Activated CD4-positive, alpha-beta T cell treated with anti-CD3 and anti-CD28 coated beads for 36 hours (primary cell): ENCODE measurements at regions of chr13 and their contacts with region 1.

Region 1: GRCh38 chr13:21297914-21298831 is 121.7 kb downstream of the MRPL57 start:
- DNase-seq: peak; percentile 93
- ATAC-seq: peak; percentile 93
- H3K4me3 Mint-ChIP-seq: peak overlapping the region; percentile 84
- H3K27ac Mint-ChIP-seq: peak overlapping the region; percentile 82
- H3K4me1 Mint-ChIP-seq: peaks cover 25% of the 10 kb centered on the region
- H3K27me3 Mint-ChIP-seq: no peaks in the 10 kb centered on the region

Region 2: DNA sequence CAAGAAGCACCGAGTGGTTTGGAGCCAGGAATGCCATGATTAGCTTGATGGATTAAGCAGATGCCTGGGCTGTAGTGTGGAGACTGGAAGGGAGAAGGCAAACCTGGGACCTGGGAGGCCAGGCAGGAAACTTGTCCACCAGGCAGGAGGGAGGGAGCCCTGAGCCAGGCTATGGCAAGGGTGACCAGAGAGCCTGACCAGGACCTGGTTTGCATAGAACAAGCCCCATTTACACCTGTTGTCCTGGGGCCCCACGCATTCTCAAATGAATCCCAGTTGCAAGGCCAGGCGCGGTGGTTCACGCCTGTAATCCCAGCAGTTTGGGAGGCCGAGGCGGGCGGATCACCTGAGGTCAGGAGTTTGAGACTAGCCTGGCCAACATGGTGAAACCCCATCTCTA is 186.6 kb before region 1 on chr13:
- CTCF ChIA-PET with region 1: no interaction called
- POLR2A ChIA-PET with region 1: no interaction called
- intact Hi-C with region 1: loop called in 1 of 2 experiments (anchors 2 kb)
- DNase-seq: no peak
- ATAC-seq: no peak
- H3K4me3 Mint-ChIP-seq: no peak overlapping the region
- H3K27ac Mint-ChIP-seq: no peak overlapping the region
- H3K4me1 Mint-ChIP-seq: peaks cover 3% of the 10 kb centered on the region
- H3K27me3 Mint-ChIP-seq: no peaks in the 10 kb centered on the region

Region 3: DNA sequence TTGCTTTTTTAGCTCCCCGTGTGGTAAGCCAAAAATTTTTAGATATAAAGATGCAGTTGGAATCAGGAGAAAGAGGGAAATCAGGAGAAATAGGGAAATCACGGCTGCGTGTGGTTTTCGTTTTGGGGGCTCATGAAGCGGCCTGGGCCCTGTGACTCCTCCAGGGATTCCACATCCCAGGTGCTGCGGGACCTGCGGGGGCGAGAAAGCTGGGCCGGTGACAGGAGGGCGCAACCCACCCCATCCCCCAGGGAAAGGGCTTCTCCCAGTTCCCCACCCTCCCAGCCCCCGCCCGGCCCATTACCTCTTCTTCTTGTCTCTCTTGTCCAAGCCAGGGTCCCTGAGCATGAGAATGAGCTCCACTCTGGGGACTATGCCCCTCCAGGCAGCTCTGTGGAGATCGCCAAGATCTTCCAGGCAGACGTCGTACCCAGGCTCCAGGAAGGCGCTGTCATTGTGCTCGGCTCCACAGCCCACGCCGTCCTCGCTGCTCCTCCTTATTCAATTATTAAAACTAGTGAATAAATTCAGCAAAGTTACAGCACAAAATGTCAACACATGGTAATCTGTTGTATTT is 10.8 kb before region 1 on chr13:
- CTCF ChIA-PET with region 1: interaction called, 10 read pairs
- POLR2A ChIA-PET with region 1: no interaction called
- intact Hi-C with region 1: no loop called
- DNase-seq: no peak
- ATAC-seq: no peak
- H3K4me3 Mint-ChIP-seq: no peak overlapping the region
- H3K27ac Mint-ChIP-seq: no peak overlapping the region
- H3K4me1 Mint-ChIP-seq: no peaks in the 10 kb centered on the region
- H3K27me3 Mint-ChIP-seq: peaks cover 8% of the 10 kb centered on the region

Region 4: GRCh38 chr13:21435710-21436151 is 137.6 kb after region 1 on chr13:
- CTCF ChIA-PET with region 1: no interaction called
- POLR2A ChIA-PET with region 1: no interaction called
- intact Hi-C with region 1: loop called in 1 of 2 experiments (anchors 1 kb)
- DNase-seq: peak; percentile 58
- ATAC-seq: peak; percentile 91
- H3K4me3 Mint-ChIP-seq: no peak overlapping the region
- H3K27ac Mint-ChIP-seq: peak overlapping the region; percentile 18
- H3K4me1 Mint-ChIP-seq: peaks cover 33% of the 10 kb centered on the region
- H3K27me3 Mint-ChIP-seq: no peaks in the 10 kb centered on the region

Region 5: DNA sequence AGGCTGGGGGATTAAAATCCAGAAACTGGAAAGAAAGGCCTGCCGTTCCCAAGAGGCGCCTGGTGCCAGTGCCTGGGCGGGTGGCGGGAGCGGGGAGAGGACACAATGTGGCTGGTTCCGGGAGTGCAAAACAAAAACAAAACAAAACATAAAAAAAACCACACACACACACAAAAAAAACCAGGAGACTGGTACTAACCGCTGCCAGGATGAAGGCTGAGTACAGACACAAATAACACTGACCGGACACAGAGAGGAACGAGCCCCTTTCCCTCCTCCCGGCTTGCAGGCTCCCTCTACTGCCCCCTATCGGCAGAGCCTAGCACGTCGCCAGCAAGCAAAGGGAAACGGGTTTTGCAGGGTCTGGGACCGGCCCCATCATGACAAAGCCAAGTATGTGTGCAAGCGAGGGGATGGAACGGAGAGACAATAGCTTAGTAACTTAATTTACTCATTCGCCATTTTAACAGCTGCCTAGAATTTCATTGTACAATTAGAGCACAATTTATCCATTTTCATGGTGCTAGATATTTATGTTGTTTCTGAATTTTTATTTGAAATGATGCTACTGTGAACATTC is 178.8 kb after region 1 on chr13:
- CTCF ChIA-PET with region 1: interaction called, 90 read pairs
- POLR2A ChIA-PET with region 1: no interaction called
- intact Hi-C with region 1: loop called (anchors 1 kb)
- DNase-seq: peak; percentile 91
- ATAC-seq: peak; percentile 96
- H3K4me3 Mint-ChIP-seq: peak overlapping the region; percentile 78
- H3K27ac Mint-ChIP-seq: peak overlapping the region; percentile 52
- H3K4me1 Mint-ChIP-seq: peaks cover 8% of the 10 kb centered on the region
- H3K27me3 Mint-ChIP-seq: no peaks in the 10 kb centered on the region

Region 6: GRCh38 chr13:21526707-21527540 is 228.8 kb after region 1 on chr13:
- CTCF ChIA-PET with region 1: no interaction called
- POLR2A ChIA-PET with region 1: no interaction called
- intact Hi-C with region 1: no loop called
- DNase-seq: no peak
- ATAC-seq: no peak
- H3K4me3 Mint-ChIP-seq: no peak overlapping the region
- H3K27ac Mint-ChIP-seq: no peak overlapping the region
- H3K4me1 Mint-ChIP-seq: peaks cover 10% of the 10 kb centered on the region
- H3K27me3 Mint-ChIP-seq: no peaks in the 10 kb centered on the region

Region 7: DNA sequence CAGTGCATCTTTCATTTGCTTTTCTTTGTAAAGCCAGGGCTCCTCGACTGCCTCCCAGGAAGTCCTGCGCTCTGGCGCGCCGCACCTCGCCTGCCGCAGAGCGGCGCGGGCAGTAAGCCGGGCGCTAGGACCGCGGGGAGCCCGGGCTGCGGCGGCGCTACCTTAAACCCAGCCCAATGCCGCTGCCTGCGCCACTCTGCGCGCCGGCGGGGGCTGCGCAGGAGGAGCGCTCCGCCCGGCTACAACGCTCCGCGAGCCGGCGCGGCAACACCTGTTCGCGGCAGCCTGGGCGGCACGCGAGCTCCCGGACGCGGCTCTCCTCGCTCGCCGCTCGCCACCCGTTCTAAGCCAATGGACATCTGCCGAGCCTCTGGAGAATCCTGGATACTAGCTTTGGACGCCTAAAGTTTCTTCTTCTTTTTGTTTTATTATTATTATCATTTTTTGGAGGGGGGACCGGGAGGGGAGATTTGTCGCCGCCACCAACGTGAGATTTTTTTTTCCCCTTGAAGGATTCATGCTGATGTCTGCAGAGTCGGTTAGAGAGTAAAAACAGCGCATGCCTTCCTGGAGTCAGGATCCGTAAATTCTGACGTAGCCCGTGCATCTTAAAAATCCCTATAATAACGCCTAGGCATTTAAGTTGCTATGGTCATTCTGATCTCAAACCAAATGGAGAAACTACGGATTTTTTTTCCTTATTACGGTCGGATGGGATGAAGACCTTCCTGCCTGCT is 372.9 kb after region 1 on chr13 and contains the start of gene FGF9:
- CTCF ChIA-PET with region 1: no interaction called
- POLR2A ChIA-PET with region 1: no interaction called
- intact Hi-C with region 1: loop called (anchors 5 kb)
- DNase-seq: peak; percentile 88
- ATAC-seq: peak; percentile 78
- H3K4me3 Mint-ChIP-seq: peak within 1 kb of the TSS; percentile 76
- H3K27ac Mint-ChIP-seq: peak within 1 kb of the TSS; percentile 53
- H3K4me1 Mint-ChIP-seq: peaks cover 45% of the 10 kb centered on the region
- H3K27me3 Mint-ChIP-seq: peaks cover 43% of the 10 kb centered on the region
- total RNA-seq, gene FGF9: 0.19 TPM in 1 of 2 experiments, not detected in the other

Region 8: GRCh38 chr13:21717817-21718216 is 419.6 kb after region 1 on chr13:
- CTCF ChIA-PET with region 1: no interaction called
- POLR2A ChIA-PET with region 1: no interaction called
- intact Hi-C with region 1: no loop called
- DNase-seq: no peak
- ATAC-seq: no peak
- H3K4me3 Mint-ChIP-seq: no peak overlapping the region
- H3K27ac Mint-ChIP-seq: no peak overlapping the region
- H3K4me1 Mint-ChIP-seq: no peaks in the 10 kb centered on the region
- H3K27me3 Mint-ChIP-seq: peaks cover 21% of the 10 kb centered on the region

Region 9: DNA sequence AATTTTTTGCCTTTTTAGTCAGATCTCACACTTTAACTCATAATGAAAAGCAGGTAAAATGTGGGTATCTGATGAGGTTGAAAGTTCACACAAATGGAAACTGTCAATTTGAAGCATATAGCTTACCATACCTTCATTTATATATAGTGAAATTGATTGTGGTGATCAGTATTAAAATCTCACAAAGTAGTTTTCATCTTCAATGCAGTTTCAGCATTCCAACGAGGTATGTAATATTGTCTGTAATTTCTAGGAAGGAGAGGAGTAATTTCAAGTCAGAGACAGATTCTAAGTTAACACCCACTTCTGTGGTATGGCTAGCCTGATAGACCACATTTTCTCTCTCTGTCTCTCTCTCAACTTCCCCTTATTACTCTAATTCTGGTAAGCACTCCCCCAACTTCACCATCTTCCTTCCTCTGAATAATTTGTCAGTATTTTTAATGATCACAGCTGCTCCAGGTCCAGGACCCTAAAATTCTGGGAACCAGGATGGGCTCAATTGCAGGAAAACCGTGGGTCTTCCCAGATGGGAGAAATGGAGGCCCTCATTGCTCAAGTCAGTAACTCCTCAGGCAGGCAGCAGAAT is 828.4 kb after region 1 on chr13:
- CTCF ChIA-PET with region 1: no interaction called
- POLR2A ChIA-PET with region 1: no interaction called
- intact Hi-C with region 1: no loop called
- DNase-seq: no peak
- ATAC-seq: peak; percentile 80
- H3K4me3 Mint-ChIP-seq: no peak overlapping the region
- H3K27ac Mint-ChIP-seq: peak overlapping the region; percentile 64
- H3K4me1 Mint-ChIP-seq: peaks cover 32% of the 10 kb centered on the region
- H3K27me3 Mint-ChIP-seq: no peaks in the 10 kb centered on the region

Region 10: DNA sequence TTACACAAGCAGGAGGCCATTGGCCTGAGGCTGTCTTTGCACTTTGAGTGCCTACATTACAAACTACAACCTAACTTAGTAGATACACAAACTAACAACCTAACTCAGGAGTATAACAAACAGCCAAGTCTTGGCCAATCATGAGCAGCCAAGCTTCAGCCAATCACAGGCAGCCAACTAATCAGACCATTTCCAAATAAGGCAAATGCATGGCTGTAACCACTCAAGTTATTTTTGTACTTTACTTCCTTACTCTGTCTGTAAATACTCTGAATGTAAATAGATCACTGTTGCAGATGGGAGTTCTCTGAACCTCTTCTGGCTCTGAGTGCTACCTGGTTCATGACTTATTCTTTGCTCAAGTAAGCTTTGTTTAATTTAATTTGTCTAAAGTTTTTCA is 1134.5 kb after region 1 on chr13:
- CTCF ChIA-PET with region 1: no interaction called
- POLR2A ChIA-PET with region 1: no interaction called
- intact Hi-C with region 1: no loop called
- DNase-seq: no peak
- ATAC-seq: no peak
- H3K4me3 Mint-ChIP-seq: no peak overlapping the region
- H3K27ac Mint-ChIP-seq: no peak overlapping the region
- H3K4me1 Mint-ChIP-seq: no peaks in the 10 kb centered on the region
- H3K27me3 Mint-ChIP-seq: peaks cover 2% of the 10 kb centered on the region